Sigmoid colon (tissue), 7 donors: ENCODE measurements at regions of chr7 and their contacts with region 1.

Region 1: DNA sequence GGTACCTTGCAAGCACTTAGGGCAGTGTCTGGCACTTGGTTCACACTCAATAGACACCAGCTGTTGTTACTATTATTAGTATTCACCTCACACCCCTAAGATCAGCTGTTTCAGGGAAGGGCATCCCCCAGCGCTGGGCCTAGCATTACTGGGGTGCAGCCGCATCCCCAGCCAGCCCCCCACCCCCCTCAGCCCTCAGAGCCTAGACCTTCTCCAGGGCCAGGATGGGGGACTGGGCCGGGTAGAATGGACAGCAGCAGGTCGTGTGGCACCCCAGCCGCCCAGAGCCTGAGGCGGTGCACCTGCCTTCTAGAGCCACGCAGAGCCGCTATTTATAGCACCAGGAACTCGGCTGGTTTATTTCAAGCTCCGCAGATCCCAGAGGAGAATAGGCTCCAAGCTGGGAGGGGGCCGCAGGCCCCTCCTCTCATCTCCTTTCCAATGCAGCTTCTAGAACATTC is 60.5 kb downstream of the GTF2IRD1 start:
- DNase-seq: peak; percentile 74
- H3K4me3 ChIP-seq: no peak overlapping the region
- H3K27ac ChIP-seq: peak overlapping the region in 3 of 4 donors; percentile 35 to 73 (median 61)
- H3K4me1 ChIP-seq: peaks cover 0 to 13% (median 11%) of the 10 kb centered on the region in 4 donors
- H3K27me3 ChIP-seq: no peaks in the 10 kb centered on the region
- CTCF ChIP-seq: no peak
- EP300 ChIP-seq: peak in 2 of 4 donors; percentile 52 to 59
- POLR2A ChIP-seq: no peak

Region 2: DNA sequence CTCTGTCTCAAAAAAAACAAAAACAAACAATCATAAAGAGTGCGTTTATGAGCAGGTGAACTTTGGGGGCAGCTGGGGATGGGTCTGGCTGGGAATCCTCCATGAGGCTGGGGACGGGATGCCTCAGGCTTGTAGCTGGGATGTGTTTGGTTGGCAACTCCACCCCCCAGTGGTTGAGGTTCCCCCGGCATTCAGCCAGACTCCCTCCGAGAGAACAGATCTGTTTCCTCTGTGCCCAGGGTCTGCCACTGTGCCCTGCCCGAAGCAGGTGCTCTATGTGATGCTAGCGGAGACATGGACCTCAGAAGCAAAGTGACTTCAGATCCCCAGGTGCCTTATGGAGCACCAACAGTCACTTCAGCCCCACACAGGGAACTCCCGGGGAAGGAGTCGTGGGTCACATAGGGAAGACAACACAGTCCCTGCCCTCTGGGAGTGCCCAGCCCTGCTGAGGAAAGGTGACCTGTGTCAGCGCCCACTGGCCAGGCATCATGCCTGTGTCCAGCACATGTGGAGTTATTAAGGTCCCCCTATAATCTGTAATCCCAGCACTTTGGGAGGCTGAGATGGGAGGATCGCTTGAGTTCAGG is 89.8 kb before region 1 on chr7:
- intact Hi-C with region 1: loop called (anchors 5 kb)
- DNase-seq: peak; percentile 46
- H3K4me3 ChIP-seq: no peak overlapping the region
- H3K27ac ChIP-seq: no peak overlapping the region
- H3K4me1 ChIP-seq: peaks cover 0 to 2% (median 0%) of the 10 kb centered on the region in 4 donors
- H3K27me3 ChIP-seq: no peaks in the 10 kb centered on the region
- CTCF ChIP-seq: no peak
- EP300 ChIP-seq: no peak
- POLR2A ChIP-seq: no peak

Region 3: GRCh38 chr7:74587435-74588126 is 73.4 kb after region 1 on chr7:
- intact Hi-C with region 1: loop called (anchors 10 kb)
- DNase-seq: peak; percentile 95
- H3K4me3 ChIP-seq: no peak overlapping the region
- H3K27ac ChIP-seq: peak overlapping the region; percentile 59 to 77 (median 68)
- H3K4me1 ChIP-seq: peaks cover 0 to 18% (median 17%) of the 10 kb centered on the region in 4 donors
- H3K27me3 ChIP-seq: no peaks in the 10 kb centered on the region
- CTCF ChIP-seq: no peak
- EP300 ChIP-seq: no peak
- POLR2A ChIP-seq: no peak